HepG2 (cell line): ENCODE measurements at regions of chr17 and their contacts with region 1.

Region 1: GRCh38 chr17:58417300-58418092 is at the start of gene RNF43:
- DNase-seq: peak; percentile 99
- ATAC-seq: peak; percentile 97
- H3K4me3 ChIP-seq: peak within 1 kb of the TSS; percentile 73 to 88 (median 81)
- H3K27ac ChIP-seq: peak within 1 kb of the TSS; percentile 77
- H3K4me1 ChIP-seq: peaks cover 15% of the 10 kb centered on the region
- H3K27me3 ChIP-seq: peaks cover 0 to 14% of the 10 kb centered on the region in 2 experiments; a peak in 3 of 5 replicates
- CTCF ChIP-seq: peak; percentile 99
- EP300 ChIP-seq: peak; percentile 73 to 78; a peak in 3 of 4 replicates
- POLR2A ChIP-seq: peak; percentile 96 to 98
- RAD21 ChIP-seq: peak; percentile 97
- total RNA-seq, gene RNF43: 51.4 and 53.4 TPM in 2 replicates

Region 2: GRCh38 chr17:58337600-58338453 is 79.7 kb before region 1 on chr17:
- CTCF ChIA-PET with region 1: no interaction called
- POLR2A ChIA-PET with region 1: interaction called, 39 read pairs
- in situ Hi-C with region 1: no loop called
- intact Hi-C with region 1: no loop called
- DNase-seq: peak; percentile 82
- ATAC-seq: peak; percentile 71
- H3K4me3 ChIP-seq: peak overlapping the region; percentile 3 to 60 (median 5); a peak in 3 of 6 replicates
- H3K27ac ChIP-seq: peak overlapping the region; percentile 24
- H3K4me1 ChIP-seq: peaks cover 62% of the 10 kb centered on the region
- H3K27me3 ChIP-seq: no peaks in the 10 kb centered on the region
- CTCF ChIP-seq: no peak
- EP300 ChIP-seq: no peak
- POLR2A ChIP-seq: no peak
- RAD21 ChIP-seq: no peak

Region 3: DNA sequence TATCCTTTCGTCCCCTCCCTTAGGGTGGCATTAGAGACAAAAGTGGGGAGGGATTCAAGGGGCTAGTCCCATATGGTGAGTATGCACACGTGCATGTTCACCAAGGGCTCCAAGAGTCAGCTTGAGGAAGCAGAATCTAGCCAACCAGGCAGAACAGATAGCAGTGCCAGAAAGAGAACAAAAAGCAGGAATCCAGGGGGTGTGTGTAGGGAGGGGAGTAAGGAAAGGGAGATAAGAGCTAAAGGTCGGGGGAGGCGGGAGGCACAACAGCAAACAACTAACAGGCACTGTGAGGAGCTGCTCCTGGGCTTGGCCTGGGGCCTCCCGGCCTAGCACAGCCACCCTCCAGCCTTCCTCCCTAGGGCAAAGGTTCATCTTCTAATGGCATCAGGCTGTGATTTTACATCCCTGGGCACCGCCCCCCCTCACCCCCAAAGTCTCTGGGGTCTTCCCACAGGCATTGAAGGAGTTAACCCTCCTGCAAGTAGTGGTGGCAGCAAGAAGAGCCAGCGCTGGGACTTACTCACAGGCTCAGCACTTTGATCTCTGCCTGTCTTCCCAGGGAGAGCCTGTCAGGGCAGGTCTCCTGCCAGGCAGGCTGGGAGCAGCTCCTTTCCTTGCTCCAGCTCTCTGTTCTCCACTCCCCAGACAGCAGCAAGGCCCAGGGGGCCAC is 53.1 kb before region 1 on chr17:
- CTCF ChIA-PET with region 1: no interaction called
- POLR2A ChIA-PET with region 1: interaction called, 244 read pairs
- in situ Hi-C with region 1: loop called (anchors 5 kb)
- intact Hi-C with region 1: loop called (anchors 1 kb)
- DNase-seq: peak; percentile 84
- ATAC-seq: peak; percentile 92
- H3K4me3 ChIP-seq: peak overlapping the region in 1 of 3 experiments; percentile 32; a peak in 2 of 6 replicates
- H3K27ac ChIP-seq: peak overlapping the region; percentile 89
- H3K4me1 ChIP-seq: peaks cover 94% of the 10 kb centered on the region
- H3K27me3 ChIP-seq: no peaks in the 10 kb centered on the region
- CTCF ChIP-seq: peak; percentile 16; the same call in 1 of the 2 replicates
- EP300 ChIP-seq: peak in 1 of 2 experiments; percentile 80; a peak in 1 of 4 replicates
- POLR2A ChIP-seq: peak; percentile 20 to 58; a peak in 1 of 4 replicates
- RAD21 ChIP-seq: peak; percentile 1

Region 4: DNA sequence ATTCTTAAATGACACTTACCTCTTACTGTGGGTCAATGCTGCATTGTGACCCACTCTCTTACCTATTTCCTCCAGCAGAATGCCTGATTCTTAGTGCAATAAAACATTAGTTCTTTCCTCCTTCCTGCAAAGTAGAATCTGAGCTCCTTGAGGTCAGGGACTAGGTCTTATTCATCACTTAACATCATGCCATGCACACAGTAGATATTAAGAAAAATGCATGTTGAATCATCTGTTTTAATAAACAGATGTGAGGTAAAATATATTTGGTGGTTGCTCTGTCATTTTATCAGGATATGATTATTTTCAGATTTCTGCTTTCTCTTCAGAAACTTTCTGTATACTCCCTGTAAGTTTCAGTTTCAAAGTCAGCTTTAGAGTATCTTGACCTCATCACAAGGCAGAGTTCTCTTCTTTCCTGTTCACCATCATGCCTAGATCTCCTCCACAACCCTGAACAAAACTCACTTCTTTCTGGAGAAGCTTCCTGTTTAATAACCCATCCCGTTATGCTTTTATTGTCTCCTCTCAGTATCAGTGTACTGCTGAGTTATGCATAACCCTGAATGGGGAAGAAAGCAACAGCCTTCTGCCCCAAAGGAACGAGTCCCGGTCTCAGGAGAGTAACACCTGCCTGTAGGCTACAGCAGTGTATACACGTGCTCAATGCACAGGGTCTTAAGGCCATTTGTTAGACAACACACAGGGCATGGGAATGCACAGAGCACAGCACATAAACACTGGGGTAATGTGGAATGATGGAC is 35.2 kb before region 1 on chr17:
- CTCF ChIA-PET with region 1: interaction called, 3 read pairs
- POLR2A ChIA-PET with region 1: interaction called, 242 read pairs
- in situ Hi-C with region 1: no loop called
- intact Hi-C with region 1: loop called (anchors 1 kb)
- DNase-seq: peak; percentile 60
- ATAC-seq: peak; percentile 32
- H3K4me3 ChIP-seq: peak overlapping the region in 1 of 3 experiments; percentile 5; a peak in 1 of 6 replicates
- H3K27ac ChIP-seq: peak overlapping the region; percentile 93
- H3K4me1 ChIP-seq: peaks cover 100% of the 10 kb centered on the region
- H3K27me3 ChIP-seq: no peaks in the 10 kb centered on the region
- CTCF ChIP-seq: 0 out of 2 replicates have a peak, but pooled peaks have one; percentile 9
- EP300 ChIP-seq: no peak; a peak in 1 of 4 replicates
- POLR2A ChIP-seq: peak in 1 of 2 experiments; percentile 40; a peak in 1 of 4 replicates
- RAD21 ChIP-seq: no peak

Region 5: DNA sequence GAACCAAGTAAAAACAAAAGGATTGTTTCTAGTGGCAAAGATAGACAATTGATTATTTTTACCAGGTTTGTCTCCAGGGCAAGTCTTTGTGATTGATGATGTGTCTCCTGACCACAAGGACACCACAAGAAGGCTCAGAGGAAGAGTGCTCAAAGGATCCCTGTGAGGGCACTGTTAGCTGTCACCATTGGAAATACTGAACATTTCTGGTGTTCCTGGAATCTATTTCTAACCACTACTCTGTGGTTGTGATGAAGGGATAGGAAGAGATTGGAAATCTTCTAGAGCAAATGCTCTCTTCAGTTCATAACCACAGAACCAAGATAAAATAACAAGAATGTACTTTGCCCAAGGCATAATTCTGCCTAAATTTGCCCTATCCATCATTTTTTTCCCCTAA is 15.4 kb before region 1 on chr17:
- CTCF ChIA-PET with region 1: no interaction called
- POLR2A ChIA-PET with region 1: interaction called, 81 read pairs
- in situ Hi-C with region 1: no loop called
- intact Hi-C with region 1: loop called (anchors 1 kb)
- DNase-seq: no peak
- ATAC-seq: no peak
- H3K4me3 ChIP-seq: no peak overlapping the region
- H3K27ac ChIP-seq: peak overlapping the region; percentile 22
- H3K4me1 ChIP-seq: peaks cover 100% of the 10 kb centered on the region
- H3K27me3 ChIP-seq: no peaks in the 10 kb centered on the region
- CTCF ChIP-seq: no peak
- EP300 ChIP-seq: no peak
- POLR2A ChIP-seq: no peak
- RAD21 ChIP-seq: no peak

Region 6: DNA sequence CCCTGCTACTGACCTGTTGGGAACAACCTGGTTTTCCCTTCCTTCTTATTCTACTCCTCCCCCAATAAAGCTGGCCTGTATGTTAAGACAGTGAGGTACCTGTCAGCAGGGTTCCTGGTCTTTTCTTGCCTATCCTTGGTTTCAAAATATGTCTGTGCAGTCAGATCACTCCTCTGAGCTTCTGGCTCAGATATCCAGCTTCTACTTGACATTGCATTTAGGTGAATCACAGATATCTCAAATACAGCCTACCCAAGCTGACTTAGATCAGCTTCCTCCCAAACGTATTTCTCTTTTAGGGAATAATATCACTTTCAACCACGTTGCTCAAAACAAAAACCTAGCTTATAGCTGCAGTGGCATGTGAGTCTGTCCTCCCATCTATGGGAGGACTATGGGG is 225.6 kb after region 1 on chr17:
- CTCF ChIA-PET with region 1: no interaction called
- POLR2A ChIA-PET with region 1: no interaction called
- in situ Hi-C with region 1: no loop called
- intact Hi-C with region 1: no loop called
- DNase-seq: no peak
- ATAC-seq: no peak
- H3K4me3 ChIP-seq: no peak overlapping the region
- H3K27ac ChIP-seq: no peak overlapping the region
- H3K4me1 ChIP-seq: no peaks in the 10 kb centered on the region
- H3K27me3 ChIP-seq: no peaks in the 10 kb centered on the region; a peak in 1 of 5 replicates
- CTCF ChIP-seq: no peak
- EP300 ChIP-seq: no peak
- POLR2A ChIP-seq: no peak
- RAD21 ChIP-seq: no peak